GM10248 (cell line): ENCODE measurements at regions of chr12 and their contacts with region 1.

Region 1: DNA sequence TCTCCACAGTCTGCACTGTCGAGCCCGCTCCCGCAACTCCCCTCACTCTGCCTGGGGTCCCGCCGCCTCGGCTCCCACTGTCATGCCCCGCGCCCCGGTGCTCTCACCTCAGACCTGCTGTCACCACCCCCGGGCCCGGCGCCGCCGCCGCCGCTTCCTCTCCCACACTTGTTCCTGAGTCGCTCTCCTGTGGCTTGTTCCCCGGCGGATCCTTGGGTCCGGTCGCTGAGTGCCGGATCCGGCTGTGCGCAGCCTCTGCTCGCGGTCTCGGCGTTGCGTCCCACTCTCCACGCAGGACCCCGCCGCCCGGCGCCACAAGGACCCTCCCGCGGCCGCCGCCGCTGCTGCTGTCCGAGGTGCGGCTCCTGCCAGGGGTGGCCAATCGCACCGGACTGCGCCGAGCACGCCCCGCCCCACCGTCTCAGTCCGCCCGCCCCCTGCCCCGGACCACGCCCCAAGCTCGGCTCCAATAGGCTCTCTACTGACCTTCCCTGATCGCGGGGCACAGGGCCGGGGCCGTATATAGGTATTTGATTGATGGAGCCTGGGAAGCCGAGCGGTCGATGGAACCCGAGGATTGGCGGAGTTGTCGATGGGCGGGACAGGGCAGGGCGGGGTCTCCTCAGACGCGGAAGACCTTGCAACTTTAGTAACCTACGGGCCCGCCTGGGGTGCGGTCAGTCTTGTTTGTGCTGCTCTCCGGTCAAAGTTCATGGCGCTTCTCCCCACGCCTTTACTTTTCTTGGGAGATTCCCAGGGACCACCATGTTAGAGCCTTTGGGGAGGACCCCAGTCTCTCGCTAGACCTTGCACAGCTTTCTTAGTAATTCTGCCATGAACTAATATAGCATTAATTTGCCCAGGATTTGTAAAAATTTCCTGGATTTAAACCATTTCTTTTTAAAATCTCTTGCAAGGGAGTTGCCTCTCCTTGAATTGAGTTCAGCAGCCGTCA is at the start of gene TAOK3:
- DNase-seq: peak; percentile 96
- CTCF ChIP-seq: no peak

Region 2: DNA sequence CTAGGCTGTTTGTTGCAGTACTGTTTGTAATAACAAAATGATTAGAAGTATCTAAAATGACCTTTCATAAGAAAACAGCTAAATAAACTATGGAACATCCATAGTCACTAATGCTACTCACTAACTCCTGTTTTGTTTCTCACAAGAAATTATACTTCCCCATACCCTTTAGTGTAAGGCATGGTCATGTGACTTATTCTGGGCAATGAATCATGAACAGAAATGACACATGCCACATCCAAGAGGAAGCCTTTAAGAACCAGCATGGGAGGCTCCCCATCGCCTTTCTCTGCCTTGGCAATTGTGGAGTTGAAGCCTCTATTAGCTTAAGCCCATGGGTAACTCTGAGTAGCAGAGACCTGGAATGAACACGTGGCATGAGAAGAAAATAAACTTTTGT is 453.3 kb before region 1 on chr12:
- CTCF ChIA-PET with region 1: no interaction called
- POLR2A ChIA-PET with region 1: no interaction called
- DNase-seq: no peak
- CTCF ChIP-seq: no peak

Region 3: GRCh38 chr12:118120579-118121363 is 252.0 kb before region 1 on chr12:
- CTCF ChIA-PET with region 1: interaction called, 118 read pairs
- POLR2A ChIA-PET with region 1: no interaction called
- DNase-seq: peak; percentile 86
- CTCF ChIP-seq: peak; percentile 56

Region 4: GRCh38 chr12:118164798-118165486 is 207.9 kb before region 1 on chr12:
- CTCF ChIA-PET with region 1: interaction called, 95 read pairs
- POLR2A ChIA-PET with region 1: no interaction called
- DNase-seq: no peak
- CTCF ChIP-seq: peak; percentile 43

Region 5: DNA sequence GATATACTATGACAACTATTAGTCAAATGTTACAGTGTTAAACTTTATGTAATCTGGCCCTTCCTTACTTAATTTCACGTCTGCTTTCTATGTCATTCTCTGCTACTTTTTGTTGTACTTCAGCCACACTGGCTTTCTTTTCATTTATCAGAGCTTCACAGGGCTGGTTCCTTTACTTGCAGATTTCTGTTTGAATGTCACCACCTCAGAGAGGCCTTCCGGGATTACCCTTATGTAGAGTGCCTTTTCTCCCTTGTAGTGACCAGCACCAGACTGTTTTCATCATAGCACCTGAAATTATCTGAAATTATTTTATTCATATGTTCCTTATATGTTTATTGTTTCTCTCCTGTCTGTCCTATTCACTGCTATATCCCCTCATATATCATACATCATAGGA is 75.5 kb before region 1 on chr12:
- CTCF ChIA-PET with region 1: interaction called, 16 read pairs
- POLR2A ChIA-PET with region 1: interaction called, 3 read pairs
- DNase-seq: no peak
- CTCF ChIP-seq: no peak

Region 6: GRCh38 chr12:118346895-118347294 is 25.9 kb before region 1 on chr12:
- CTCF ChIA-PET with region 1: interaction called, 13 read pairs
- POLR2A ChIA-PET with region 1: interaction called, 8 read pairs
- DNase-seq: no peak
- CTCF ChIP-seq: no peak

Region 7: GRCh38 chr12:118398940-118399339 is 26.1 kb after region 1 on chr12:
- CTCF ChIA-PET with region 1: interaction called, 89 read pairs
- POLR2A ChIA-PET with region 1: no interaction called
- DNase-seq: no peak
- CTCF ChIP-seq: no peak

Region 8: GRCh38 chr12:118590406-118591150 is 217.8 kb after region 1 on chr12:
- CTCF ChIA-PET with region 1: no interaction called
- POLR2A ChIA-PET with region 1: no interaction called
- DNase-seq: no peak
- CTCF ChIP-seq: no peak